ENCODE measurements at regions of chr3 and their contacts with region 1.

Region 1: GRCh38 chr3:141769221-141769894 is 6.2 kb downstream of the GRK7 start:
- DNase-seq: no peak
- H3K4me3 ChIP-seq: no peak overlapping the region
- CTCF ChIP-seq: no peak

Region 2: GRCh38 chr3:141360888-141361598 is 408.3 kb before region 1 on chr3:
- in situ Hi-C with region 1: no loop called
- DNase-seq: peak; percentile 80
- H3K4me3 ChIP-seq: no peak overlapping the region
- CTCF ChIP-seq: peak; percentile 77

Region 3: GRCh38 chr3:141677701-141678100 is 91.7 kb before region 1 on chr3:
- in situ Hi-C with region 1: no loop called
- DNase-seq: no peak
- H3K4me3 ChIP-seq: no peak overlapping the region
- CTCF ChIP-seq: no peak

Region 4: GRCh38 chr3:141722081-141722480 is 47.3 kb before region 1 on chr3:
- in situ Hi-C with region 1: no loop called
- DNase-seq: no peak
- H3K4me3 ChIP-seq: no peak overlapping the region
- CTCF ChIP-seq: no peak

Region 5: GRCh38 chr3:141863491-141863890 is 94.1 kb after region 1 on chr3:
- in situ Hi-C with region 1: loop called (anchors 5 kb)
- DNase-seq: no peak
- H3K4me3 ChIP-seq: no peak overlapping the region
- CTCF ChIP-seq: no peak